GM10248 (cell line): ENCODE measurements at regions of chr11 and their contacts with region 1.

Region 1: GRCh38 chr11:12235947-12236743 is 125.8 kb downstream of the MICAL2 start:
- DNase-seq: peak; percentile 51
- CTCF ChIP-seq: peak; percentile 54

Region 2: GRCh38 chr11:12043959-12044819 is 192.0 kb before region 1 on chr11:
- CTCF ChIA-PET with region 1: interaction called, 66 read pairs
- POLR2A ChIA-PET with region 1: no interaction called
- DNase-seq: peak; percentile 68
- CTCF ChIP-seq: peak; percentile 90

Region 3: GRCh38 chr11:12122083-12122482 is 114.1 kb before region 1 on chr11:
- CTCF ChIA-PET with region 1: interaction called, 28 read pairs
- POLR2A ChIA-PET with region 1: no interaction called
- DNase-seq: no peak
- CTCF ChIP-seq: peak; percentile 10

Region 4: GRCh38 chr11:12207384-12208150 is 28.6 kb before region 1 on chr11:
- CTCF ChIA-PET with region 1: interaction called, 17 read pairs
- POLR2A ChIA-PET with region 1: no interaction called
- DNase-seq: no peak
- CTCF ChIP-seq: no peak

Region 5: DNA sequence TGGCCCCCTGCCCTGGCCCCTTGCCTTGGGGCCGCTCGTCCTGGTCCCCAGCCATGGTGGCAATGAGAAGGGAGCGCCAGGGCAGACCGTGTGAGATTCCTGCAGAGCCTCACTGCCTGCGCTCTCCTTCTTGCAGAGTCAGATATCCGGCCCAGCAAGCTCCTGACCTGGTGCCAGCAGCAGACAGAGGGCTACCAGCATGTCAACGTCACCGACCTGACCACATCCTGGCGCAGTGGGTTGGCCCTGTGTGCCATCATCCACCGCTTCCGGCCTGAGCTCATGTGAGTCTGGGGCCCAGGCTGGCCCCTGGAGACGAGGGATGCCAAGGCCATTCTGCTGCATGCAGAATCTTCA is 11.6 kb before region 1 on chr11:
- CTCF ChIA-PET with region 1: interaction called, 56 read pairs
- POLR2A ChIA-PET with region 1: no interaction called
- DNase-seq: peak; percentile 42
- CTCF ChIP-seq: no peak

Region 6: GRCh38 chr11:12260731-12261521 is 24.8 kb after region 1 on chr11:
- CTCF ChIA-PET with region 1: interaction called, 12 read pairs
- POLR2A ChIA-PET with region 1: no interaction called
- DNase-seq: no peak
- CTCF ChIP-seq: no peak

Region 7: DNA sequence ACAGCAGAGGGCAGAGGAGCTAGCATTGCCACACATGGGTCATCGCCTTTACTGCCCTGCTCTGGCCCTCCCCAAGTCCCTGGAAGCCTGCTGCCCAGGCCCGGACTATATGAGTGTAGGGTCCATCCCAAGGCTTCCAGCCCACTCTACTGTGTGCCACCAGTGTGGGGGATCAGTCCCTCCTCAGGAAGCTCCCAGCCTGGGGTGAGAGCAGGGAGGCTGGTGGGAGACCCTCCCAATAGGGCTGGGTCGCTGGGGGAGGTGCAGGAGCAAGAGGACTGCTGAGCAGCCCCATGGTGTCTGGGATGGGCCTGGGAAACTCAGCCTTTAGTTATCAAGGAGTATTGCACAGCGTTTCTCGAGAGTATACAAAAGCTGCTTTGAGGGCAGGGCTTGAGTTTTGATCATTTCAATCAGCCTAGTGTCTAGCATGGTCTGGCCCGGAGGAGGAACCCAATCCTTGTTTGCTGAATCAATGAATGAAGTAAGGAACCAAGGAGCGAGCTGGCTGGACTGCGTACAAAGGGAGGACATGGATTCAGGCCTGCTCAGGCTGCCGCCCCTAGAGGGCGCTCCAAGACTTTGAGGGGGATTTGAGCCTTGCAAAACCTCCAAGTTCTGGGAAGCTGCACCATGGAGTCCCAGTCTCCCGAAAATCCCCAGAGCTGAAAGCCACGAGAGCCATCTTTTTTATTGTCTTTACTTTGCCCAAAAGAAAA is 52.2 kb after region 1 on chr11:
- CTCF ChIA-PET with region 1: interaction called, 13 read pairs
- POLR2A ChIA-PET with region 1: no interaction called
- DNase-seq: peak; percentile 77
- CTCF ChIP-seq: peak; percentile 88